Activated B cell treated with CpG ODN at 0.5 μM for 24 hours (primary cell): ENCODE measurements at regions of chr17 and their contacts with region 1.

Region 1: GRCh38 chr17:46199379-46199778 is 6.2 kb upstream of the KANSL1 start:
- DNase-seq: no peak
- ATAC-seq: no peak
- H3K4me3 Mint-ChIP-seq: no peak overlapping the region
- H3K27ac Mint-ChIP-seq: no peak overlapping the region
- H3K4me1 Mint-ChIP-seq: peaks cover 32% of the 10 kb centered on the region
- H3K27me3 Mint-ChIP-seq: no peaks in the 10 kb centered on the region
- CTCF ChIP-seq: no peak

Region 2: GRCh38 chr17:46212634-46213435 is 13.5 kb after region 1 on chr17:
- CTCF ChIA-PET with region 1: interaction called, 22 read pairs
- POLR2A ChIA-PET with region 1: interaction called, 3 read pairs
- intact Hi-C with region 1: loop called (anchors 1 kb)
- DNase-seq: no peak
- ATAC-seq: peak; percentile 77
- H3K4me3 Mint-ChIP-seq: no peak overlapping the region
- H3K27ac Mint-ChIP-seq: no peak overlapping the region
- H3K4me1 Mint-ChIP-seq: peaks cover 7% of the 10 kb centered on the region
- H3K27me3 Mint-ChIP-seq: no peaks in the 10 kb centered on the region
- CTCF ChIP-seq: peak; percentile 63

Region 3: DNA sequence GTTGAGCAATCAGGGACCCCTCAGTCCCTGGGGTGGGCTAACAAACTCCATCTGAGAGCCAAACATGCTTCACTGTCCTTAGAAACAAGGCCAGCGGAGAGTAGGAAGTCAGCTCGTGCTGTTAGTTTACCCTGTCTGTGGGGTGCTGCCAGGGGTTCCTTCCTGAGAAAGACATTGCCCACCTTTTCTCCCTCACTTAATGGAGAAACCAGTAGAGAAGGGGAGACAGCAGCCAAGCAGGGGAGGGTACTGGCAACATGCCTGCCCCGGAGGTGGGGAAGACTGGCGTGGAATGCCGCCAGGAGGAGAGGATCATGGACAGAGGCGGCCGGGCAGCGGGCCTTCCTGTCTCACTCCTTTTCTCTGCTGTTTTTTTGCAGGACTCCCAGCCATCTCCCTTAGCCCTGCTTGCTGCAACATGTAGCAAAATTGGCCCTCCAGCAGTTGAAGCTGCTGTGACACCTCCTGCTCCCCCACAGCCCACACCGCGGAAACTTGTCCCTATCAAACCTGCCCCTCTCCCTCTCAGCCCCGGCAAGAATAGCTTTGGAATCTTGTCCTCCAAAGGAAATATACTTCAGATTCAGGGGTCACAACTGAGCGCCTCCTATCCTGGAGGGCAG is 1716.5 kb after region 1 on chr17:
- CTCF ChIA-PET with region 1: no interaction called
- POLR2A ChIA-PET with region 1: interaction called, 12 read pairs
- intact Hi-C with region 1: no loop called
- DNase-seq: no peak
- ATAC-seq: no peak
- H3K4me3 Mint-ChIP-seq: no peak overlapping the region
- H3K27ac Mint-ChIP-seq: no peak overlapping the region
- H3K4me1 Mint-ChIP-seq: peaks cover 4% of the 10 kb centered on the region
- H3K27me3 Mint-ChIP-seq: no peaks in the 10 kb centered on the region
- CTCF ChIP-seq: no peak